Right ventricle myocardium inferior (tissue), 1 donor: ENCODE measurements at regions of chr1 and their contacts with region 1.

Region 1: DNA sequence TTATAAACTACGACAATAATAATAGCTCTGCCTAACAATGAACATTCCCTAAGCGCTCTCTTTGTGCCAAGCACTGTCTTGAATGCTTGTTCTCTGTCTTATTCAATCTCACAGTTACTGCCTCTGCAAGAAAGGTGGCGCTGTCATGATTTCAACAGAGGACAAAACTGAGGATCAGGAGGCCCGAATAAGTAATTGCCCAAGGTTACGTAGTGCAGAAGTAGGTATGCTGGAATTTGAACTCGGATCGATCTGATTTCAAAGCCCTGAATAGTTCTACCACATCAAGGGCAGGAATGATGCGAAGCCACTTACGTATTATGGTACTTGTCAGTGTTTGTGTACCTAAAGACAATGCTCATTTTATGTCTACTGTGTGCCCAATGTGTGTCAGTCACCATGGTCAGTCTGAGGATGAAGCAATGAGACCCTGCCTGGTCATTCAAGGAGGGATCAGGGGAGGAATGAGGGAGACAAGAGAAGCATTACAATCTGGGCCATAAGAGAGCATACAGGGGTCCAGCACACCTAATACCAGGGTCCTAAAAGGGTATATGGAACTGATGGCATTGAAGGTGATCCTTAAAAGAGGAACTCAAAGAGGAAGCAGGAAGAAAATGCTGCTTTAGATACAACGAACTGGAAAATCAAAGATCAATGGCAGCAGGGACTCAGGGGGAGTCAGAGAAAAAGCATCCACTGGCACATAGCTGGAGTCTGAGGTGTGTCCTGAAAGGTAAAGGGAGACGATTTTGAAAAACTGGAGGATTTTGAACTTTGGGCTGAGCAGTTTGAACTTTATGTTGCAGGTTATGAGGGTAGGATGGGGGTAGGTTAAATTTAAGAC is 389.2 kb downstream of the PLPP3 start:
- DNase-seq: no peak
- ATAC-seq: no peak

Region 2: DNA sequence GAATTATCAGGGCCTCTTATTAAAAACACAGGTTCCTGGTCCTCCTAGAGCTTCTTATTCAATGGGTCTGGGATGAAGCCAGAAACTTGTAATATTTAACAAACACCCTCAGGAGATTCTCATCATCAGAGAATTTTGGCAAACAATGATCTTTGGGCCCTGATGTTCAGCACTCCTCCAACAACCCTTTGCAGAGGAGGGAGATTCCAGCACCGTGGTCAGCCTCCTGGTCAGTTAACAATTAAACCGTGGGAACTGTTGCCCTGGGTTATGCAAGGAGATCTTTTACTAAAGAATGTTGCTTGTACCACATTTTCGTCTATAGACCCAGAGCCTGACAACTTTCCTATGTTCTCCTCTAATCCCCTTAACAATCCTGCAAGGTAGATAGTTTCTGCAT is 94.8 kb after region 1 on chr1:
- intact Hi-C with region 1: loop called (anchors 10 kb)
- DNase-seq: peak; percentile 14
- ATAC-seq: peak; percentile 81